ENCODE measurements at regions of chr10 and their contacts with region 1.

Region 1: GRCh38 chr10:84537447-84537931 is 209.1 kb downstream of the CCSER2 start:
- DNase-seq: peak; percentile 81
- H3K4me3 Mint-ChIP-seq: no peak overlapping the region
- H3K27ac Mint-ChIP-seq: no peak overlapping the region
- H3K4me1 Mint-ChIP-seq: peaks cover 20% of the 10 kb centered on the region
- H3K27me3 Mint-ChIP-seq: peaks cover 20% of the 10 kb centered on the region

Region 2: DNA sequence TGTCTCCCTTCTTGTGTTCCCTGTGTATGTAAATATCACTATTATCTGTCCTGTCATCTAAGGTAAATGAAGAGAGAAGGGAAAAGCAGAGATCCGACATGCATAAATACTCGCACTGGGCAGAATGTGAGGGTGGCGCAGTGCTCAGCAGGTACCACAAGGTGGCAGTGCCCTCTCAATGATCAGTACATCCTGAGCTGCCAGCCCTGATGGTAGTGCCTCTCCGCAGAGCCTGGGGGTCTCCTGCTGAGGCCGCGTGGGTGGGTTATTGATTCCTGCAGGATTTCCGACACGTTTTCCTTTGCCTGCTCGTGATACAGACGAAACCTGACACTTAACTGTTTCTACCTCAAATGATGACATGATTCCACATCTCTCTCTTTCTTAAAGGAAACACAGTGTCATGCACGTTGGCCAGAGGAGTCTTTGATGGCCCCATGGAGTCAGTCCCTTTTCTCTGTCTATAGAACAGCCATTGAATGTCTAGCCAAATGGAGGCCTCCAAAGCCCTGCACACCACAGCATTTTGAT is 272.8 kb before region 1 on chr10:
- intact Hi-C with region 1: loop called (anchors 1 kb)
- DNase-seq: peak; percentile 91
- H3K4me3 Mint-ChIP-seq: no peak overlapping the region
- H3K27ac Mint-ChIP-seq: no peak overlapping the region
- H3K4me1 Mint-ChIP-seq: peaks cover 16% of the 10 kb centered on the region
- H3K27me3 Mint-ChIP-seq: peaks cover 20% of the 10 kb centered on the region

Region 3: DNA sequence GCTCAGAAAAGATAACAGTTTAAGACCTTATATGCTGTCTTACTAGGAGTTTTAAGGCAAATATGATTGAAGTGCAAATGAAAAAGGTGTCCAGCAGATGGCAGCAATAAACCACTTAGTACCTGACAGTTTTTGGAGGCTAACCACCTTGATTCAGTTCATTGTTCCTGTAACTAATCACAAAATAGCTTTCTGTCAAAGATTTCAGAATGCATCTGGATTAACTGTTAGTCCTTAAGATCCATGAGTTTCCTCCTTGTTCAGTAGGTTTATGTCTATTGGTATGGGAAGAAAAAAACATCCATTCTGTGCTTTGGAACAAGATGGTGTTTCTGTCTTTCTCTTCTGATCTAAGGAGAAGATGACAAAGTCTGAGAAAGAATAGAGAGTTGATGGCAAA is 162.5 kb before region 1 on chr10:
- intact Hi-C with region 1: loop called (anchors 1 kb)
- DNase-seq: peak; percentile 82
- H3K4me3 Mint-ChIP-seq: no peak overlapping the region
- H3K27ac Mint-ChIP-seq: no peak overlapping the region
- H3K4me1 Mint-ChIP-seq: peaks cover 17% of the 10 kb centered on the region
- H3K27me3 Mint-ChIP-seq: no peaks in the 10 kb centered on the region

Region 4: GRCh38 chr10:84510121-84510520 is 27.4 kb before region 1 on chr10:
- intact Hi-C with region 1: no loop called
- DNase-seq: no peak
- H3K4me3 Mint-ChIP-seq: no peak overlapping the region
- H3K27ac Mint-ChIP-seq: no peak overlapping the region
- H3K4me1 Mint-ChIP-seq: no peaks in the 10 kb centered on the region
- H3K27me3 Mint-ChIP-seq: no peaks in the 10 kb centered on the region

Region 5: DNA sequence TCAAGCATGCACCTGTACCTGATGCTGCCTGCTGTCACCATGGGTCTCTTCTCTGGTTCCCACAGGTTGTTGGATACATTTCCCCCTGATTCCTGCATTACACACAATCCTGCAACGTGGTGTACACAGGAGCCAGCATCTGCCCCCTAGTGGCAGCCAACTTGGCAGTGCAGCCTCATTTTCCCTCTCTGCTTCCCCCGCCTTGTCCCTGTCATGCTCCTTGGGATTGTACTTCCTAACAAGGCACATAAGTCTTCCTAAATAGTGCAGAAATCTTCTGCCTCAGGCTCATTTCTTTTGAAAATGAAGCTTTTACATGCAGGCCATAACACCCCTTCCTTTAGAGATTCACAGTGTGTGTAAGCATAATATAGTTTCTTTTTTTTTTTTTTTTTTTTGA is 178.4 kb after region 1 on chr10:
- intact Hi-C with region 1: loop called (anchors 2 kb)
- DNase-seq: peak; percentile 65
- H3K4me3 Mint-ChIP-seq: no peak overlapping the region
- H3K27ac Mint-ChIP-seq: no peak overlapping the region
- H3K4me1 Mint-ChIP-seq: no peaks in the 10 kb centered on the region
- H3K27me3 Mint-ChIP-seq: peaks cover 4% of the 10 kb centered on the region

Measured in activated CD4-positive, alpha-beta T cell treated with anti-CD3 and anti-CD28 coated beads, Interleukin-2, amount 10 ng/mL, durations not matched to agents 24 days and 14 days (primary cell).